ENCODE measurements at regions of chr12 and their contacts with region 1.

Region 1: DNA sequence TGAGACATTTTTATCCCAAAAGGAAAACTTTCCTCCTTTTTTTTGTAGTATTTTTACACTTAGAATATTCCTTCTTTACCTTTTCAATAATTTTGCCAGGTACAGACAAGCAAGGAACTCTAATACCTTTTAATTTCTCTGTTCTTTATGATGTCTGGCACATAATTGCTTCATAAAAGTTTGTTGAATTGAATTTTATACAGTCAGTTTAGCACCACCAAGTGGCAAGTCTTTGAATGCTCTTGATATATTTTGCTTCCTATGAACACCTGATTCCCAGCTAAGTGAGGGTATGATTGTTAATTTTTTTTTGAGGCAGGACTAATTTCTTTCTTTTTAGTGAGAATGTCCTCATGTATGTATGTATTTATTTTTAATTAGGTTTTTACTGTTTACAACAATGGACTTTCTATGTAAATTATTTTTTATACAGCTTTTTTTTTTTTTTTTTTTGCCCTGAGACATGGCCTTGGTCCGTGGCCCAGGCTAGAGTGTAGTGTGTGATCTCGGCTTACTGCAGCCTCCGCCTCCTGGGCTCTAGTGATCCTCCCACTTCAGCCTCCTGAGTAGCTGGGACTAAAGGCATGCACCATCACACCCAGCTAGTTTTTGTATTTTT is 6.9 kb downstream of the TBC1D15 start:
- DNase-seq: no peak
- H3K4me3 ChIP-seq: no peak overlapping the region
- CTCF ChIP-seq: peak; percentile 21

Region 2: DNA sequence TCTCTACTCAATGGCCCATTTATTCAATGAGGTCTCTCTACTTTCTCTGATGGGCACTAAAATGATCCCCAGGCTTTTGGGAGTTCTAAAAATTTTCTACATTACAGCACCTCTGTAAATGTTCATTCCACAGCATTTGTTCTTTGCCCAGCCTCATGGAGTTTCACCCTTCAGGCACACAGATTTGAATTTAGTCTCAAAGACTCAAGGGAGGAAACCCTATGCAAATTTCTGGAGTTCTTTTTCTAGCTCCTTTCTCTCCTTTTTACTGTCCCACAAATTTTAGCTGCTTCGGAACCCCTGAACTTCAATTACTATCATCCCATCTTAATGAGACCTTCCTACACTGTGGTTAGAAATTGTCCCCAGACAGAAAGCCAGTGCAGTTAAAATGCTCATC is 109.2 kb before region 1 on chr12:
- CTCF ChIA-PET with region 1: no interaction called
- POLR2A ChIA-PET with region 1: no interaction called
- DNase-seq: no peak
- H3K4me3 ChIP-seq: no peak overlapping the region
- CTCF ChIP-seq: no peak

Region 3: GRCh38 chr12:71865166-71865713 is 18.8 kb after region 1 on chr12:
- CTCF ChIA-PET with region 1: interaction called, 14 read pairs
- POLR2A ChIA-PET with region 1: interaction called, 3 read pairs
- DNase-seq: peak; percentile 91
- H3K4me3 ChIP-seq: no peak overlapping the region
- CTCF ChIP-seq: no peak